ENCODE measurements at regions of chr4 and their contacts with region 1.

Region 1: DNA sequence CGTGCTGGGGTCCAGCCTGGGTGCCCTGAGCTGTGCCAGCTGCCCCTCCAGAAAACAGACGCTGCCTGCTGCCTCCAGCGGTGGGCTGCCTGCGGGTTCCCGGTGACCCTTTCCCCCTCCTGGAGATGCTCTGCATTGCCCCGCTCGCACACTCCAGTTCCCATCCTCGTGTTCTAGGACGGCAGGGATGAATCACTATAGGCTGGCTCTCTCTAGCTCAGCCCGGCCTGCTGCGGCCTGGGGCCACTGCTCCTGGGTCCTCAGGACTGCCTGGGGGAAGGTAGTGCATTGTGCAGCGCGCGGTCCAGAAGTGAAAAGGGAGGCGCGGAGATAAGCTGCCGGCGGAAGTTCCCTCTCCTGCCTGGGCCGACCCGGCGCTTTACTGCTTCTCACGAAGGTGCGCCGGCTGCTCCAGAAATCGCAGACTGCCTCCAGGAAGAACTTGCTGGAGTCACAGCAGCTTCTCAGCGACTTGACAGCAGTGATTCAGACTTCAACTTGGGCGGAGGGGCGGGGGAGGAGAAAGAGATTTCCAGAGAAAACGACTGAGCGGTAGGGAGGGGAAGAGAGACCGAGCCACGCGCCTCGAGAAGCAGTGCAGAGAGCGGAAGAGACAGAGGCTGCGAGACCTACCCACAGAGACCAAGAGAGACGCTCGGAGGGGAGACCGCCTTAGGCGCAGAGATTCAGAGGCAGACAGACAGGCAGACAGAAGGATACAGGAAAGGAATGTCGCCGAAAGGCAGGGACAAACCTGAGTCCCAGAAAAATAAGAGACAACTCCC is 6.7 kb upstream of the MSX1 start:
- DNase-seq: peak; percentile 66
- H3K4me3 Mint-ChIP-seq: peak overlapping the region; percentile 60
- H3K27ac Mint-ChIP-seq: no peak overlapping the region
- H3K4me1 Mint-ChIP-seq: peaks cover 30% of the 10 kb centered on the region
- H3K27me3 Mint-ChIP-seq: peaks cover 63% of the 10 kb centered on the region

Region 2: GRCh38 chr4:4362991-4363697 is 489.6 kb before region 1 on chr4:
- CTCF ChIA-PET with region 1: no interaction called
- POLR2A ChIA-PET with region 1: no interaction called
- intact Hi-C with region 1: no loop called
- DNase-seq: no peak
- H3K4me3 Mint-ChIP-seq: no peak overlapping the region
- H3K27ac Mint-ChIP-seq: no peak overlapping the region
- H3K4me1 Mint-ChIP-seq: no peaks in the 10 kb centered on the region
- H3K27me3 Mint-ChIP-seq: peaks cover 4% of the 10 kb centered on the region

Region 3: GRCh38 chr4:4762909-4763821 is 89.6 kb before region 1 on chr4:
- CTCF ChIA-PET with region 1: no interaction called
- POLR2A ChIA-PET with region 1: no interaction called
- intact Hi-C with region 1: loop called (anchors 2 kb)
- DNase-seq: peak; percentile 79
- H3K4me3 Mint-ChIP-seq: peak overlapping the region; percentile 51
- H3K27ac Mint-ChIP-seq: peak overlapping the region; percentile 61
- H3K4me1 Mint-ChIP-seq: peaks cover 25% of the 10 kb centered on the region
- H3K27me3 Mint-ChIP-seq: peaks cover 7% of the 10 kb centered on the region

Region 4: GRCh38 chr4:4820261-4820660 is 32.5 kb before region 1 on chr4:
- CTCF ChIA-PET with region 1: no interaction called
- POLR2A ChIA-PET with region 1: no interaction called
- intact Hi-C with region 1: no loop called
- DNase-seq: no peak
- H3K4me3 Mint-ChIP-seq: no peak overlapping the region
- H3K27ac Mint-ChIP-seq: no peak overlapping the region
- H3K4me1 Mint-ChIP-seq: no peaks in the 10 kb centered on the region
- H3K27me3 Mint-ChIP-seq: no peaks in the 10 kb centered on the region

Region 5: GRCh38 chr4:4941741-4942140 is 89.0 kb after region 1 on chr4:
- CTCF ChIA-PET with region 1: no interaction called
- POLR2A ChIA-PET with region 1: no interaction called
- intact Hi-C with region 1: no loop called
- DNase-seq: no peak
- H3K4me3 Mint-ChIP-seq: no peak overlapping the region
- H3K27ac Mint-ChIP-seq: no peak overlapping the region
- H3K4me1 Mint-ChIP-seq: peaks cover 7% of the 10 kb centered on the region
- H3K27me3 Mint-ChIP-seq: peaks cover 3% of the 10 kb centered on the region